ENCODE measurements at regions of chr7 and their contacts with region 1.

Region 1: DNA sequence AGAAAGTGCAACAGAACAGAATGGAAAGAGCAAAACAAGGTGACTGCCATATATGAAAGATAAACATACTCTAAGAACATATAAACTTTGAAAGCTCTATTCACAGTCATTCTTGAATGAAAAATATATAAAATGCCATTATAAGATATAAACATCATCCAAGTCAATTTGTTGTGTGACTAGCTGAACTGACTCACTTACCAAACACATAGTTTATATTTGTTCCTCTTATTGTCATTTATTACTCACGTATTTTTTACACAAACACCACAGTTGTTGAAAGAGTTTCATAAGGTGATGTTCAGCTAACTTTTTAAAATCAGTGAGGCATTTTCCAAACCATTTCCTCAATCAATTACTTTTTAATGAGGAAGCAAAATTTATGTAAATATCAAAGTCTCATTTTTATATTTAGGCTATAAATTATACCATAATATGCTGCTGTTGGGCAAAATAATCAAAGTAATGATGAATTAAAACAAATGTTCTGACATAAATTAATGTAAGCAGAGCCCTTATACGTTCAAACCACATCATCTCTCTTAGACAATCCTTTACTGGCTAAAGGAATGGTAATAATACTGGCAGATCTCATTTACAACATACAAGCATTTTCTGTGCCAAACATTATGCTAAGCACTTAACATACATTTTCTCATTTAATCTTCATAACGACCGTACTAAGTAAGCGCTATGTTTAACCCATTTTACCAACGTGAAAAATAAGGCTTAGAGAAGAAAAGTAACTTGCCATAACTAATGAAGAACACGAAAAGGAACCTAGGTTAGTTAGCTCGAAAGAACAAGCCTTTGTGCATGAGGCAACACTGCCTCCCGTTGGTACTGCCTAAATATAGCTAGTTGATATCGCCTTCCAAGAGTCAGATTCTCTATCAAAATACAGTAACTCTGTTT is 7.3 kb downstream of the LRRN3 start:
- DNase-seq: no peak
- CTCF ChIP-seq: peak; percentile 52

Region 2: GRCh38 chr7:110595690-110596325 is 502.5 kb before region 1 on chr7:
- in situ Hi-C with region 1: loop called (anchors 25 kb)
- DNase-seq: no peak
- CTCF ChIP-seq: no peak

Region 3: GRCh38 chr7:111486472-111487142 is 388.3 kb after region 1 on chr7:
- in situ Hi-C with region 1: loop called (anchors 25 kb)
- DNase-seq: peak; percentile 56
- CTCF ChIP-seq: peak; percentile 66

Region 4: DNA sequence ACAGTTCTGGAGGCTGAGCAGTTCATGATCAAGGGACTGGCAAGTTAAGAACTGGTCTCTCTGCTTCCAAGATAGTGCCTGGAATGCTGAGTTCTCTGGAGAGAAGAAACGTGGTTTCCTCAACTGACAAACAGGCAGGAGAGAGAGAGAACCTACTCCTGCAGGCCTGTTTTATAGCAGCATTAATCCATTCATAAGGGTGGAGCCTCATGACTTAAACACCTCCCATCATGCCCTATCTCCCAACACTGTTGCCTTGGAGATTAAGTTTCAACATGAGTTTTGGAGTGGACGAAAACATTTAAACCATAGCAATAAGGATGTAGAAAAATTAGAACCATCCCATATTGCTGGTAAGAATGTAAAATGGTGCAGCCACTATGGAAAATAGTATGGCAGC is 496.3 kb after region 1 on chr7:
- in situ Hi-C with region 1: no loop called
- DNase-seq: no peak
- CTCF ChIP-seq: no peak

Region 5: GRCh38 chr7:111741811-111742240 is 643.6 kb after region 1 on chr7:
- in situ Hi-C with region 1: loop called (anchors 25 kb)
- DNase-seq: peak; percentile 71
- CTCF ChIP-seq: peak; percentile 50

Measured in GM13976 (cell line).